ENCODE measurements at regions of chr11 and their contacts with region 1.

Region 1: DNA sequence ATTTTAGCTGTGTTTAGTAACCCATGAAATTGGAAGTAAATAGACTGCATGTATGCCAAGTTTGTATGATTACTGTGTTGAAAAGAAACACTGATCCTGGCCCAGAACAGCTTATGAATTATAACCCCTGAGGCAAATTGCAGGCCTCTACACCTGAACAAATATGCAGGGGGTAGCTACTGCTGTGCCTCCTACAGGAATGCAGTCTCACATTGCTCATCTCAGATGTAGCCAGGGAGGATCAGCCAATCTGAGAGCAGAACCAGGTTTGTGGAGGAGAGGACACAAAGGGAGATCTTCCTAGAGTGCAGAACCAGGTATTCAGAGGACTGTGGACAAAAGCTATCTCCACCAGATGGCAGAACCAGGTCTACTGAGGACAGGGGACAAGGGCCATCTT is 442.2 kb upstream of the DDI1 start:
- DNase-seq: no peak
- ATAC-seq: no peak
- H3K4me3 ChIP-seq: no peak overlapping the region
- H3K27ac ChIP-seq: no peak overlapping the region
- H3K4me1 ChIP-seq: no peaks in the 10 kb centered on the region
- H3K27me3 ChIP-seq: no peaks in the 10 kb centered on the region
- CTCF ChIP-seq: no peak

Region 2: GRCh38 chr11:103202048-103202651 is 392.1 kb before region 1 on chr11:
- intact Hi-C with region 1: loop called in 1 of 10 experiments (anchors 5 kb)
- DNase-seq: no peak
- ATAC-seq: no peak
- H3K4me3 ChIP-seq: no peak overlapping the region
- H3K27ac ChIP-seq: no peak overlapping the region
- H3K4me1 ChIP-seq: no peaks in the 10 kb centered on the region
- H3K27me3 ChIP-seq: no peaks in the 10 kb centered on the region
- CTCF ChIP-seq: peak in 8 of 9 donors; percentile 24 to 64 (median 54)

Region 3: GRCh38 chr11:103464420-103464819 is 129.9 kb before region 1 on chr11:
- intact Hi-C with region 1: loop called in 1 of 10 experiments (anchors 10 kb)
- DNase-seq: no peak
- ATAC-seq: no peak
- H3K4me3 ChIP-seq: no peak overlapping the region
- H3K27ac ChIP-seq: no peak overlapping the region
- H3K4me1 ChIP-seq: peaks cover 0 to 5% (median 0%) of the 10 kb centered on the region in 9 donors
- H3K27me3 ChIP-seq: no peaks in the 10 kb centered on the region
- CTCF ChIP-seq: peak in 2 of 9 donors; percentile 3 to 11

Region 4: DNA sequence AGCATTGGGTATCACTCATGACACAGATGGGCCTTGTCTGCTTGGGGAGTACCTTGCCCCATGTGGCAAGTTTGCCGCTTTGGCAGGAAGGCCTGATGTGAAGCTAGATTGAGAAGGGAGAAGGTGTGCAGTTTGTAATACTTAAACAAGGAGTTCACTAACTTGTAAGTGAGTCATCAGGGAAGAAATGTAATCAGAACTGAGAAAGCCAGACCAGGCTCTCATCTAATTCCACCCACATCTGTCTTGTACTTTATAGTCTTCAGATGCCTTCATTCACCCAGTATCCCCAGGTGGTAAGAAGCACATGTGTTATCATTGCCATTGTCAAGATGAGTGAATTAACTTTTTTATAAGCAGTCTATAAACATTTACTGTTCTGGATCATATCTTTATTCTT is 326.2 kb after region 1 on chr11:
- intact Hi-C with region 1: no loop called
- DNase-seq: no peak
- ATAC-seq: no peak
- H3K4me3 ChIP-seq: no peak overlapping the region
- H3K27ac ChIP-seq: no peak overlapping the region
- H3K4me1 ChIP-seq: peaks cover 0 to 13% (median 6%) of the 10 kb centered on the region in 9 donors
- H3K27me3 ChIP-seq: no peaks in the 10 kb centered on the region
- CTCF ChIP-seq: no peak